Calu3 (cell line): ENCODE measurements at regions of chr13 and their contacts with region 1.

Region 1: DNA sequence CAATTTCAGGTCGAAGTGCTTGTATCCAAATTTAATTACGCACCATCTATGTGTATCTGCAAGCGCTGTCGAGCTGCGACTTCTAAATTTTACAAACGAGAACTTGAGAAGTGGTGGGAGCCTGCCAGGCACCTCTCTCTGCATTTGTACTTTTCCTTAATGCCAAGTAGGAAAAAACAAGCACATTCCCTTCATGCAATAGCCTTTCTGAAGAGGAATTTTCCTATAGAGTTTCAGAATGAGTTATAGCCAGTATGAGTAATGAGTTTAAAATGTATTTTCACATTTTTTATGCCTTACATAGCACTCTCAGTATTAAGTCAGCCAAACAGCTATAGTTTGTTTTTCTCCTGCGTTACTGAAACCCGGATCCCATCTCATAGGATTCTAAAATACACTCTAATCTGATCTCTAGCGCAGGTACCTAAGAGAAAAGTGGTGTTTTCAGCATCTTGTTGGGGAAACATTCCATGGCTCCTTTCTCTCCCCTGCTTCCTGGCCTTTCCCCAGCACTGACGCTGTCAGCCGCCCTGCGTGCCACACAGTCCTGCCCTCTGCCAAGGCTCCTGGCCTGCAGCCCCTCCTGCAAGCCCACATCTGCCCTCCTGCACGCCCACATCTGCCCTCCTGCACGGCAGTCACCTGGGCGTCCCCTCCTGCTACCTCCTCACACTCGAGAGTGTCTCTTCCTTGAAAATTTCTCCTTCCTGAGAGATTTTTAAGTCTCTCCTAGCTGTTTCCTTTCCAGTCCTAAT is 526.9 kb downstream of the MYO16 start:
- DNase-seq: no peak
- H3K4me3 Mint-ChIP-seq: peak overlapping the region; percentile 57
- H3K27ac Mint-ChIP-seq: peak overlapping the region; percentile 91
- H3K4me1 Mint-ChIP-seq: peaks cover 40% of the 10 kb centered on the region
- H3K27me3 Mint-ChIP-seq: no peaks in the 10 kb centered on the region
- CTCF ChIP-seq: no peak

Region 2: DNA sequence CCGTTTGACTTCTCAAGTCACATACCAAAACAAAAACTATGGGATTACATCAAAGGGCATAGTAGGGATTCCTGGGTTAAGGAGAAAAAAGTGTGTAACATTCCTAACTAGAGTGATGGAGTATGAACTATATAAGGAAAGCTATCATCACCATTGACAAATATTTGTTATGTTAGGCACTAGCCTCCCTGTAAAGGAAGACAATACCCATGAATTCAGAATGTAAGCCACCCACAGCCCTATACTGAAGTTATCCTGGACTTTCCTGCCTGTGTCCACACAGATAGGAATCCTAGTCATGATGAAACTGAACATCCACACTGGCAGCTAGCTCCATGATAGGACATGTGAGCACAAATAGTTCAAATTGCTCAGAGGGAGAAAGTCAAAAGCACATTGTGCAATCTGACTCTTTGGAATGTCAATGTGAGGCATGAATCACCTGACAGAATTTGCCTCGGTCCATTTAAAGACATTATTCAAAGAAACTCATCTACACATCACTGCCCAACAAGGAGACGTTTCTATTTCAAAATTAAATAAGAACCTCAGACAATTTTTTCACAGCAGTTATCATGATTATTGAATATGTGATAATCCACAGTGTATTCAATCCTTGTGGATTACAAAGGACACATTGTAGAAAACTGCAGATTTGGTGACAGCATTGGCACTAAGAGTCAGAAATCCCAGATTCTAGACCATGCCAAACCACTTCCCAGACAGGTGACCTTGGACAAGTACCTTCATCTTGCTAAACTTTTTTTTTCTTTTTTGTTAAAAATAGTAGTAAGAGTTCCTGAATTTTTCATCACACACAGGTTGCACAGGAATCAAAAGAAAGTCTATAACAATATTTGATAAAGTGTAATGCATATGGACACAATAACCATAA is 100.8 kb after region 1 on chr13:
- CTCF ChIA-PET with region 1: no interaction called
- intact Hi-C with region 1: loop called (anchors 10 kb)
- DNase-seq: peak; percentile 9
- H3K4me3 Mint-ChIP-seq: no peak overlapping the region
- H3K27ac Mint-ChIP-seq: peak overlapping the region; percentile 50
- H3K4me1 Mint-ChIP-seq: no peaks in the 10 kb centered on the region
- H3K27me3 Mint-ChIP-seq: no peaks in the 10 kb centered on the region
- CTCF ChIP-seq: no peak

Region 3: GRCh38 chr13:109369353-109370052 is 213.1 kb after region 1 on chr13:
- CTCF ChIA-PET with region 1: no interaction called
- intact Hi-C with region 1: no loop called
- DNase-seq: no peak
- H3K4me3 Mint-ChIP-seq: no peak overlapping the region
- H3K27ac Mint-ChIP-seq: no peak overlapping the region
- H3K4me1 Mint-ChIP-seq: no peaks in the 10 kb centered on the region
- H3K27me3 Mint-ChIP-seq: no peaks in the 10 kb centered on the region
- CTCF ChIP-seq: no peak

Region 4: DNA sequence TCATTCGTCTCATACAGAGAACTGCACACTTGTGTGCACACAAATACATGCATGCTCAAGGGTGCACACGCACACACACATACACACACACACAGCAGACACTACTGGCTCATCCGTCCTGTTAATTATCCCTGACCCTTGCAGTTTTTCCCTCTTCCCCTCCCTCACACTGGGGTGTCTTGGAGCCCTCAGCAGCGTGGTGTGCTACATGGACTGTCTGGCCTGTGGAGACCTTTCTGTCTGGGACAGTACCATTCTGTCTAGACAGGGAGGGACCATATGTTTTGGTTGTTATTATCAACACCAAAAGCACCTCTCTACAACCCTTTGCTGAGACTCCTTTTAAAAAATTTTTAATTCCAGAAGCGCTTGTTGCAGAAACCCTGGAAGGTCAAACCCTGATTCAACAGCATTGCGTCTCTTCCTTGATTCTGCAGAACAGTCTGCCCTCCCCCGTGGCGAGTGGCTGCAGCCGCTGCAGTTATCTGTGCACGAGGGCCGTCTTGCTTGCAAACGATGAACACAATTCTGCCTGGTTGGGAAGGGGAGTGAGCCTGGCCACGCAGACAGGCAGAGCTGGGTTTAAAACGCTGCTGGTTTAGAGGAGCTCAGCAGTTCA is 256.0 kb after region 1 on chr13:
- CTCF ChIA-PET with region 1: no interaction called
- intact Hi-C with region 1: no loop called
- DNase-seq: peak; percentile 0
- H3K4me3 Mint-ChIP-seq: no peak overlapping the region
- H3K27ac Mint-ChIP-seq: no peak overlapping the region
- H3K4me1 Mint-ChIP-seq: peaks cover 7% of the 10 kb centered on the region
- H3K27me3 Mint-ChIP-seq: no peaks in the 10 kb centered on the region
- CTCF ChIP-seq: no peak